ENCODE measurements at regions of chr1 and their contacts with region 1.

Region 1: DNA sequence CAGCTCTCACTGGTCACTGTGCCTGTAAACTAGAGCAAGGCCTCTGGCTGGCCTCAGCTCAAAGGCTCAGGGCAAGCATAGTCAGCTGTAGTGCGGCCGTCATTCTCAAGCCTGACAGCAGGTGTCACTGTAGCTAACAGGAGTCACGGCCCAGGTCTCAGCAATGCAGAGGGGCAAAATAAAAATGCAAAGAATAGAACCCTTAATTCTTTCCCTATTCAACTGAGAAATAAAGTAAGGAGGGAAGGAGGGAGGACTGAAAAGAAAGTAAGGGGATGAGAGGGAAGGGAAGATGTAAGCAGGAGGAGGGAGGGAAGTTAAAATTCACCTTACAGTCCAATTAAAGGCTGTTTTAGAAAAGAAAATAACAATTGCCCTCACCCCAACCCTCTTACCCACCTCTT is 106.1 kb downstream of the KIAA0319L start:
- DNase-seq: peak; percentile 78
- ATAC-seq: peak; percentile 84
- H3K4me3 Mint-ChIP-seq: no peak overlapping the region
- H3K27ac Mint-ChIP-seq: no peak overlapping the region
- H3K4me1 Mint-ChIP-seq: peaks cover 12% of the 10 kb centered on the region
- H3K27me3 Mint-ChIP-seq: no peaks in the 10 kb centered on the region

Region 2: DNA sequence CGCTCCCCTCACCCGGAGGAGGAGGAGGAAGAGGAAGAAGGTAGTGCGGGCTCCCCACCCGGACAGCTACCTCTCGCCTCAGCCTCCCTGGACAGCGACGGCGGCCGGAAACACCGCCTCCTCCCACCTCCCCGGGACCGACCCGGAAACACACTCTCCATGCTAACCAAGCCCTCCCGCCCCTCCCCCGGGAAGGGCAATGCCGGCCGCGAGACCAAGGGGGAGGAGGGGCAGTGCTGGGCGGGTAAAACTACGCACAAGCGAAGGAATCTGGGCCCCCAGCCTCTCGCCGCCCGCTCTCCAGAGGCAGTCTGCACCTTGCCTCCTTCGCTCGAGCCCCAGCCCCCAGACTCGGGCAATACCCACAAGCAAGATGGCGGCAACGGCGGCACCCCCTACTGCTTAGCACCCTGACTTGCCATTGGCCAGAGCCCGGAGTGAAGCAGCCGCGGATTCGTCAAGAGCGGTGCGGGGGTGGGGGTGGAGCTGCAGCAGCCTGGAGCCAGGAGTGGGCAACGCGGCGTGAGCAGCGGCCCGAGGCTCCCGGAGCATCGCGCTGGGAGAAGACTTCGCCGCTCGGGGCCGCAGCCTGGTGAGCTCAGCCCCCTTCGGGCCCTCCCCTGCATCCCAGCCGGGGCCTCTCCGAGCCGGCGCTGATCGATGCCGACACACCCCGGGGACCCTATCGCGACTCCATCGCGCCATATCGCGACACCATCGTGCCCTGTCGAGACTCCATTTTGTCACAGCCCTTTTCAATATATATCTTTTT is 106.4 kb after region 1 on chr1 and contains the starts of genes KIAA0319L and NCDN:
- POLR2A ChIA-PET with region 1: interaction called, 10 read pairs
- DNase-seq: peak; percentile 94
- ATAC-seq: peak; percentile 95
- H3K4me3 Mint-ChIP-seq: peak within 1 kb of the TSS; percentile 92
- H3K27ac Mint-ChIP-seq: peak within 1 kb of the TSS; percentile 96
- H3K4me1 Mint-ChIP-seq: peaks cover 33% of the 10 kb centered on the region
- H3K27me3 Mint-ChIP-seq: no peaks in the 10 kb centered on the region
- total RNA-seq, gene KIAA0319L: 49.8 to 51.8 TPM
- total RNA-seq, gene NCDN: 21.5 to 23.2 TPM

Measured in activated naive CD8-positive, alpha-beta T cell treated with anti-CD3 and anti-CD28 coated beads, Interleukin-2, amount 10 ng/mL, durations not matched to agents 7 days and 5 days (primary cell).